ENCODE measurements at regions of chr22 and their contacts with region 1.

Region 1: GRCh38 chr22:34943830-34944229 is 122.1 kb upstream of the ISX start:
- DNase-seq: no peak
- H3K4me3 ChIP-seq: no peak overlapping the region
- H3K27ac ChIP-seq: no peak overlapping the region
- H3K4me1 ChIP-seq: no peaks in the 10 kb centered on the region
- H3K27me3 ChIP-seq: no peaks in the 10 kb centered on the region
- CTCF ChIP-seq: peak in 3 of 5 experiments; percentile 5 to 24 (median 18)
- EP300 ChIP-seq: no peak
- POLR2A ChIP-seq: no peak

Region 2: DNA sequence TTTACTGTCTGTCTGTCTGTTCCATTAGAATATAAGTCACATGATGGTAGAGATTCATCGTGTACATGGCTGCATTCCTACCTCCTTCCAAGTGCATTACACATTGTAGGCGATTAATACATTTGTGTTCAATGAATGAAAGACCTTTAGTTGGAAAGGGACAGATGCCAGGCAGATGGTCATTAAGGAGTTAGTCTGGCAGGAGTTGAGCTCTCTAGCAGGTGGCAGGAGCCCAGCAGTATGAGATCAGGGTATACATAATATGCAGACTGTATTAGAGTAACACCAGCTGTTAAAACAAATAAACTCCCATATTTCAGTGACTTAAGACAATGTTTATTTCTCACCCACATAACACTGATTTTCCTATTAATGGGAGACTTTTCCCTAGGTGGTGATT is 875.8 kb before region 1 on chr22:
- in situ Hi-C with region 1: no loop called
- intact Hi-C with region 1: loop called (anchors 5 kb)
- DNase-seq: no peak
- H3K4me3 ChIP-seq: no peak overlapping the region
- H3K27ac ChIP-seq: no peak overlapping the region
- H3K4me1 ChIP-seq: no peaks in the 10 kb centered on the region
- H3K27me3 ChIP-seq: no peaks in the 10 kb centered on the region
- CTCF ChIP-seq: no peak
- EP300 ChIP-seq: no peak
- POLR2A ChIP-seq: no peak

Region 3: DNA sequence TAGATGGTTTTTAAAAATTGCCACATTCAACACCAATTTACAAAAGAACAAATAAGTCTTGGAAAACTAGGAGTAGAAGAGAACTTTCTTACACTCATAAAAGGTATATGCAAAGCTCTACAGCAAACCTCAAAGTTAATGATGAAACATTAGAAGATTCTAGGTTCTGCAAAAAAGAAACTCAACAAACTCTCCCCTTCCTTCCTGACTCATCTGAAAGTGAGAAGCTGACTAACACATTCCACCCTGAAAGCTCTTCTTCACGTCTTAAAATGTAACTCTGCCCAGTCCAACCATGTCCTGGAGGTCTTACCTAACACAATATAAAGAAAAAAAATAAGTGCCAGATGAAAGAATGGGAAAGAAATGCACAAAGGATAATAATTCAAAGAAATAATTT is 96.8 kb before region 1 on chr22:
- in situ Hi-C with region 1: loop called in 1 of 4 experiments (anchors 25 kb)
- intact Hi-C with region 1: no loop called
- DNase-seq: no peak
- H3K4me3 ChIP-seq: no peak overlapping the region
- H3K27ac ChIP-seq: no peak overlapping the region
- H3K4me1 ChIP-seq: no peaks in the 10 kb centered on the region
- H3K27me3 ChIP-seq: peaks cover 8% of the 10 kb centered on the region
- CTCF ChIP-seq: no peak
- EP300 ChIP-seq: no peak
- POLR2A ChIP-seq: no peak

Region 4: GRCh38 chr22:35033635-35034296 is 89.9 kb after region 1 on chr22:
- in situ Hi-C with region 1: no loop called
- intact Hi-C with region 1: no loop called
- DNase-seq: no peak
- H3K4me3 ChIP-seq: no peak overlapping the region
- H3K27ac ChIP-seq: no peak overlapping the region
- H3K4me1 ChIP-seq: no peaks in the 10 kb centered on the region
- H3K27me3 ChIP-seq: peaks cover 14% of the 10 kb centered on the region
- CTCF ChIP-seq: no peak
- EP300 ChIP-seq: no peak
- POLR2A ChIP-seq: no peak